GM12878 (cell line): ENCODE measurements at regions of chr12 and their contacts with region 1.

Region 1: DNA sequence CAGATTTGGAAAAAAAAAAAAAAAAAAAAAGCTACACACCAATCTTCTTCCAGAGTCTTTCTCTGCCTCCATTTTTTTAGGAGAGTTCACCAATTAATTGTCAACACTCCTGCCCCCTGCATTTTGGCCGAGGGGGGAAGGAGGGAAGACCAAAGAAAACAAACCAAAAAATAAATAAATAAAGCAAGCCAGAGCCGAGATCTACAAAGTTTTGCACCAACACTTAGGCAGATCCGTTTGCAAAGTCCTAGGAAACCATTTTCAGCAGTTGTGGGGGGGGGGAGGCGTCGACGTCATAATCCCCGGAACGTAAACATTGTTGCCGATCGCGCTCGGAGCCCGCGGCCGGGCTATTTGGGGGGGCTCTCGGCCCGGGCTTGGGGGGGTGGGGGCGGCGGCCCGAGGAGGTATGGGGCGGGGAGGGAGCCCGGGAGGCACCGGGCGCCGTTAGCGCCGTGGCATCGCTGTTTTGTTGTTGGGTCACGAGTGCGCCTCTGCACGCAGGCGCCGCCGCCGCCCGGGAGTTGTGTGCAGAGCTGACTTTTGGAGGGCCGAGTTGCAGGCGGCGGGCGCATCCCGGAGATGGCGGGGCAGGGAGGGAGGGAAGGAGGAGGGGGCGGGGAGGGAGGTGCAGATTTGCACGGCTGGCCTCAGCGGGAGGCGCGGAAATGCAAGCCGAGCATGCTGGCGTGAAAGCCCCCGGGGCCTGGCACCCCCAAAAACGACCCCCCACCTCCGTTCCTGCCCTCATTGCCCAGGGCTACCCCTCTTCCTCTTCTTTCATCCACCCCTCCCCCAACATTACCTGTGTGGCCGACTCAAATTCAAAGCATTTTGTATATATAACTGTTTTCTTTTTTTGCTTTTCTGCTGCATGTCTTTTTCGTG is 598 bp downstream of the KDM2B start:
- DNase-seq: no peak
- ATAC-seq: peak; percentile 67
- H3K4me3 ChIP-seq: peak overlapping the region; percentile 77
- H3K27ac ChIP-seq: peak overlapping the region; percentile 59
- H3K4me1 ChIP-seq: peaks cover 19% of the 10 kb centered on the region
- H3K27me3 ChIP-seq: no peaks in the 10 kb centered on the region
- CTCF ChIP-seq: no peak
- EP300 ChIP-seq: no peak
- POLR2A ChIP-seq: peak; percentile 69
- RAD21 ChIP-seq: no peak

Region 2: GRCh38 chr12:121499929-121500793 is 80.1 kb before region 1 on chr12:
- CTCF ChIA-PET with region 1: interaction called, 11 read pairs
- POLR2A ChIA-PET with region 1: interaction called, 7 read pairs
- RAD21 ChIA-PET with region 1: interaction called, 8 read pairs
- SMC1A ChIA-PET with region 1: interaction called, 3 read pairs
- in situ Hi-C with region 1: no loop called
- intact Hi-C with region 1: no loop called
- DNase-seq: no peak
- ATAC-seq: peak; percentile 94
- H3K4me3 ChIP-seq: no peak overlapping the region
- H3K27ac ChIP-seq: no peak overlapping the region
- H3K4me1 ChIP-seq: no peaks in the 10 kb centered on the region
- H3K27me3 ChIP-seq: no peaks in the 10 kb centered on the region
- CTCF ChIP-seq: peak; percentile 85 to 96 (median 91)
- EP300 ChIP-seq: no peak
- POLR2A ChIP-seq: no peak
- RAD21 ChIP-seq: peak; percentile 92

Region 3: GRCh38 chr12:121560392-121561008 is 19.7 kb before region 1 on chr12:
- CTCF ChIA-PET with region 1: interaction called, 5 read pairs
- POLR2A ChIA-PET with region 1: interaction called, 36 read pairs
- RAD21 ChIA-PET with region 1: interaction called, 51 read pairs
- SMC1A ChIA-PET with region 1: interaction called, 48 read pairs
- in situ Hi-C with region 1: no loop called
- intact Hi-C with region 1: no loop called
- DNase-seq: peak; percentile 63
- ATAC-seq: peak; percentile 89
- H3K4me3 ChIP-seq: no peak overlapping the region
- H3K27ac ChIP-seq: peak overlapping the region; percentile 65
- H3K4me1 ChIP-seq: peaks cover 31% of the 10 kb centered on the region
- H3K27me3 ChIP-seq: no peaks in the 10 kb centered on the region
- CTCF ChIP-seq: no peak
- EP300 ChIP-seq: peak; percentile 79 to 89; a peak in 3 of 4 replicates
- POLR2A ChIP-seq: no peak
- RAD21 ChIP-seq: no peak

Region 4: GRCh38 chr12:121568971-121569751 is 11.1 kb before region 1 on chr12:
- CTCF ChIA-PET with region 1: interaction called, 4 read pairs
- POLR2A ChIA-PET with region 1: interaction called, 13 read pairs
- RAD21 ChIA-PET with region 1: no interaction called
- SMC1A ChIA-PET with region 1: interaction called, 4 read pairs
- in situ Hi-C with region 1: no loop called
- intact Hi-C with region 1: no loop called
- DNase-seq: no peak
- ATAC-seq: peak; percentile 71
- H3K4me3 ChIP-seq: no peak overlapping the region
- H3K27ac ChIP-seq: no peak overlapping the region
- H3K4me1 ChIP-seq: no peaks in the 10 kb centered on the region
- H3K27me3 ChIP-seq: no peaks in the 10 kb centered on the region
- CTCF ChIP-seq: no peak
- EP300 ChIP-seq: no peak
- POLR2A ChIP-seq: no peak
- RAD21 ChIP-seq: no peak

Region 5: DNA sequence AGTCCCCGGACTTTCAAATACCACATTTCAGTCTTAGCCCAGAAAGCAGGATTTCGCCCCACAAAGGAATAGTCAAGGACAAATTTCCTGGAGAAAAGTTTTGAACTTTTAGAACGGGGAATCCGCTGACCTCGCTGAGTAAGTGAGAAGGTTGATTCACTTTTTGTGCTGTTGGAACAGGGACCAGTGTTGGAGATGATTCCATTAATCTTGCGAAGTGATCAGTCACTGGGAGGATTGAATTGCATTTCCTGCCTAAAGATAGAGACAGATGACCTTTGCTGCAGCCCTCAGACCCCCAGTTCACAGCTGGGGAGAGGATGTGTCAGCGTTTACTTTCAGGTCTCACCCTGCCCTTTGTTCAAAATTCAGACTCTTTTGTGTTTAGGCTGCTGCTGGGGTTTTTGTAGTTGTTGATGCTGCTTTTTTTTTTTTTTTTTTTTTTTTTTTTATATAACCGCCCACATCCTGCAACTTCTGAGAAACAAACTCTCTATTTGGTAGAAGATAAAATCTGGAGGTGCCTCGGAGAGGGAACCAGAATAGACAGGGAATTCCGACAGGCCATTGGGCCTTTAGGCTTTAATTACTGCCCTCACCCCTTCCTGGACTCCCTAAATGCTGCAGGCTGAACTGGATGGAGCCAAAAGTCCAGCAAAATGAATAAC is 10.4 kb after region 1 on chr12:
- CTCF ChIA-PET with region 1: interaction called, 6 read pairs
- POLR2A ChIA-PET with region 1: interaction called, 18 read pairs
- RAD21 ChIA-PET with region 1: interaction called, 25 read pairs
- SMC1A ChIA-PET with region 1: interaction called, 15 read pairs
- in situ Hi-C with region 1: no loop called
- intact Hi-C with region 1: no loop called
- DNase-seq: peak; percentile 74
- ATAC-seq: peak; percentile 91
- H3K4me3 ChIP-seq: peak overlapping the region; percentile 61
- H3K27ac ChIP-seq: peak overlapping the region; percentile 82
- H3K4me1 ChIP-seq: peaks cover 10% of the 10 kb centered on the region
- H3K27me3 ChIP-seq: no peaks in the 10 kb centered on the region
- CTCF ChIP-seq: no peak
- EP300 ChIP-seq: peak in 1 of 2 experiments; percentile 62; a peak in 1 of 4 replicates
- POLR2A ChIP-seq: peak; percentile 63
- RAD21 ChIP-seq: no peak

Region 6: DNA sequence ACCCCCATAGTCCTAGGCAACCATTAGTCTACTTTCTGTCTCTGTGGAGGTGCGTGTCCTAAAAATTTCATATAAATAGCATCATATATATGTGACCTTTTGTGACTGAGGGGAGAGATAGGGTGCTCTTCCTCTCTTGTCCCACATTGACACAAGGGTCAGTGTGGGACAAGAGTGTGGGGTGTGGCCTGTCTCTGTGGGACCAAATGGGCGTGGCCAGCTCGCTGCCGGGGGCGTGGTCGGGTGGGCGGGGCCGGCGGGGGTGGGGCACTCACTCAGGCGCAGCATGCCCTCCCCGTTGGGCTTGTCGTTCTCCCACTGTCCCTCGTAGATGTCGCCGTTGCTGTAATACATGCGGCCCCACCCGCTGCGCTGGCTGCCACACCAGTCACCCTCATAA is 73.8 kb after region 1 on chr12:
- CTCF ChIA-PET with region 1: no interaction called
- POLR2A ChIA-PET with region 1: no interaction called
- RAD21 ChIA-PET with region 1: no interaction called
- SMC1A ChIA-PET with region 1: no interaction called
- in situ Hi-C with region 1: no loop called
- intact Hi-C with region 1: no loop called
- DNase-seq: no peak
- ATAC-seq: no peak
- H3K4me3 ChIP-seq: no peak overlapping the region
- H3K27ac ChIP-seq: no peak overlapping the region
- H3K4me1 ChIP-seq: peaks cover 15% of the 10 kb centered on the region
- H3K27me3 ChIP-seq: no peaks in the 10 kb centered on the region
- CTCF ChIP-seq: no peak
- EP300 ChIP-seq: no peak
- POLR2A ChIP-seq: no peak
- RAD21 ChIP-seq: no peak

Region 7: DNA sequence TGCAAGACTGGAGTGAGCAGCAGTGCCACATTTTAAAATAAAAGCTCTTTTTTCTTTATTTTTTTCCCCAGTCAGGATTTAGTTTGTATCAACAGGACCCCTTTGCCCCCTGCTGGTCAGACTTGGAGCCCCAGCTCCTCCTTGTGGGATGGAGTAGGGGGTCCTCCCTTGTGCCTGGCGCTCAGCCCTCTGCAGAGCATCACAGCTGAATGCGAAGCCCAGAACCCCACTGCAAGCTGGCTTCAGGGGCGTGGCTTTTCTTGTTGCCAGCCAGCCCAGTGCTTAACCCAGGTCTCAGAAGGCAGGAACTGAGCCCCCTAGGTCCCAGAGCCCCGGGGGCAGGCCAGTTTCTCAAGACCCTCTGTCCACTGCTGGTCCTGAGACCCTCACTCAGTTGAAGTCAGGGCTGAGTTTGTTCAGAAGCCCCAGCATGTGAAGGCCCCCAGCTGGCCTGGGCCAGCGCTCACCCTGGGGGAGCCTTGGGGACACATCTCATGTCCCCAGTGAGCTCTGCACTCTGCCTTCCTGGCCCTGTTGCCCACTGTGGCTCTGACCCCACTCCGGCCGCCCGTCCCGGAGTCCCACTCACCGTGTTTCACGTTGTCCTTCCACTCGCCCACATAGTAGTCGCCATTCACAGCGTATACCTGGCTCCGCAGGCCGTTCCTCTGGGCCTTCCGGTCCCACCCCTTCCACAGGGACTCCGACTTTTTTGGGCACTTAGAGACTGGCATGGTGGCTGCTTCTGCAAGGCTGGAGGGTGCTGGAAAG is 88.7 kb after region 1 on chr12:
- CTCF ChIA-PET with region 1: interaction called, 13 read pairs
- POLR2A ChIA-PET with region 1: interaction called, 5 read pairs
- RAD21 ChIA-PET with region 1: interaction called, 3 read pairs
- SMC1A ChIA-PET with region 1: interaction called, 3 read pairs
- in situ Hi-C with region 1: no loop called
- intact Hi-C with region 1: no loop called
- DNase-seq: no peak
- ATAC-seq: no peak
- H3K4me3 ChIP-seq: no peak overlapping the region
- H3K27ac ChIP-seq: no peak overlapping the region
- H3K4me1 ChIP-seq: peaks cover 15% of the 10 kb centered on the region
- H3K27me3 ChIP-seq: no peaks in the 10 kb centered on the region
- CTCF ChIP-seq: peak; percentile 58 to 71 (median 59)
- EP300 ChIP-seq: no peak
- POLR2A ChIP-seq: no peak
- RAD21 ChIP-seq: peak; percentile 73